ENCODE measurements at regions of chr2 and their contacts with region 1.

Region 1: GRCh38 chr2:117820444-117820843 is 6.0 kb downstream of the DDX18 start:
- DNase-seq: no peak
- H3K4me3 ChIP-seq: no peak overlapping the region
- H3K27ac ChIP-seq: no peak overlapping the region
- H3K4me1 ChIP-seq: peaks cover 20% of the 10 kb centered on the region
- H3K27me3 ChIP-seq: no peaks in the 10 kb centered on the region
- CTCF ChIP-seq: no peak
- POLR2A ChIP-seq: no peak

Region 2: GRCh38 chr2:118003396-118003824 is 183.0 kb after region 1 on chr2:
- intact Hi-C with region 1: loop called (anchors 10 kb)
- DNase-seq: no peak
- H3K4me3 ChIP-seq: no peak overlapping the region
- H3K27ac ChIP-seq: no peak overlapping the region
- H3K4me1 ChIP-seq: peaks cover 7% of the 10 kb centered on the region
- H3K27me3 ChIP-seq: no peaks in the 10 kb centered on the region
- CTCF ChIP-seq: peak; percentile 47 to 85 (median 74)
- POLR2A ChIP-seq: no peak

Region 3: DNA sequence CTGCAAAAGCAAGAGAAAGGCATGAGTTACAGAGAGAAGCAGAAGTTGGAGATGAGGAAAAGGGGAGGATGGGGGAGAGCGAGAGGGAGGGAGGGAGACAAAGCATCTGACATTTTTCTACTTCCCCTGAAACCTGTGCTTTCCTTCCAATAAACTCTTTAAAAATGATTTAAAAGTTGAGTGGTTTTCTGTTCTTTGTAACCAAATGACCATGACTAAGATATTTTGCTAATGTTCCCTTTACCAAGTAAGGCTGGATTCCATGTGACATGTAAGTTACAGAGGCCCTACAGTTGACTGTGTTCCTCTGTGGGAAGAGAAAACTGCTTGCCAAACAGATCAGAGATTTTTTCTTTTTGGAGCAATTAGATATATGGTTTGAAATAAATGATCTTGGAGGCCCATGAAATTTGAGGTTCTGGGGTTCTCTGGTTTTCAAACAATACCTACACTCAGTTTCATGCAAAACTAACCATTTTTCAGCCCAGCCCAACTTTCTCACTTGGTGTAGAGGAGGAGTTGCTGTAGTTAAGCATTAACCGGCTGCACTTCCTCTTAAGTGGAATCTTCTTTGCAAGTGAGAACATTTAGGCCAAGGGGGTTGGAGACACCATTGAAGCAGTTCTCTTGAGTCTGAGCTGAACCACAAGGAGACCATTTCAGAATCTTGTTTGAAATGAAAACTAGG is 302.3 kb after region 1 on chr2:
- intact Hi-C with region 1: no loop called
- DNase-seq: no peak
- H3K4me3 ChIP-seq: no peak overlapping the region
- H3K27ac ChIP-seq: no peak overlapping the region
- H3K4me1 ChIP-seq: peaks cover 7% of the 10 kb centered on the region
- H3K27me3 ChIP-seq: no peaks in the 10 kb centered on the region
- CTCF ChIP-seq: no peak
- POLR2A ChIP-seq: no peak

Measured in vagina (tissue), 2 donors.